A673 (cell line): ENCODE measurements at regions of chr12 and their contacts with region 1.

Region 1: GRCh38 chr12:3620856-3621255 is 129.9 kb downstream of the PRMT8 start:
- DNase-seq: no peak
- H3K4me3 ChIP-seq: no peak overlapping the region
- H3K27ac ChIP-seq: no peak overlapping the region
- H3K4me1 ChIP-seq: no peaks in the 10 kb centered on the region
- H3K27me3 ChIP-seq: peaks cover 34% of the 10 kb centered on the region
- CTCF ChIP-seq: no peak

Region 2: GRCh38 chr12:4320853-4321701 is 700.2 kb after region 1 on chr12 and contains the start of gene TIGAR:
- CTCF ChIA-PET with region 1: no interaction called
- POLR2A ChIA-PET with region 1: no interaction called
- intact Hi-C with region 1: no loop called
- DNase-seq: peak; percentile 98
- H3K4me3 ChIP-seq: peak within 1 kb of the TSS; percentile 92
- H3K27ac ChIP-seq: peak within 1 kb of the TSS; percentile 86
- H3K4me1 ChIP-seq: no peaks in the 10 kb centered on the region
- H3K27me3 ChIP-seq: no peaks in the 10 kb centered on the region
- CTCF ChIP-seq: no peak
- total RNA-seq, gene TIGAR: 11.6 and 15.5 TPM in 2 replicates

Region 3: DNA sequence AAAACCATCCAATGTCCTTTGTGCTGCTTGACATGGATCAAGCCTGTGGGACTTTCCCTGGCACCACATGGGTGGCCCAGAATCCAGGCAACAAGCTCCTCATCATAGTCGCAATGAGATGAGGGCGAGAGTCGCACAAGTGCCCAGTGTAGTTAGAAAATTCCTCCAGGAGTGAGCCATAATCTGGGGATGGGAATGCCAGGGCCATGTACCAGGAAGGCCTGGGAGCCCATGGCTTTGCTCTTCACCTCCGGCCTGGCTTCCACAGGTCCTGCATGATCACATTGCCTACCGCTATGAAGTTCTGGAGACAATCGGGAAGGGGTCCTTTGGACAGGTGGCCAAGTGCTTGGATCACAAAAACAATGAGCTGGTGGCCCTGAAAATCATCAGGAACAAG is 975.0 kb after region 1 on chr12:
- CTCF ChIA-PET with region 1: no interaction called
- POLR2A ChIA-PET with region 1: interaction called, 10 read pairs
- intact Hi-C with region 1: no loop called
- DNase-seq: no peak
- H3K4me3 ChIP-seq: no peak overlapping the region
- H3K27ac ChIP-seq: no peak overlapping the region
- H3K4me1 ChIP-seq: no peaks in the 10 kb centered on the region
- H3K27me3 ChIP-seq: peaks cover 48% of the 10 kb centered on the region
- CTCF ChIP-seq: no peak